Mucosa of descending colon (tissue), 3 donors: ENCODE measurements at regions of chr4 and their contacts with region 1.

Region 1: GRCh38 chr4:55345980-55346850 is at the start of gene SRD5A3:
- DNase-seq: peak; percentile 88 to 94 (median 89)
- ATAC-seq: peak; percentile 99
- H3K4me3 ChIP-seq: peak within 1 kb of the TSS; percentile 57
- H3K4me1 ChIP-seq: peaks cover 10% of the 10 kb centered on the region
- CTCF ChIP-seq: peak; percentile 96
- total RNA-seq, gene SRD5A3: 5.9 to 14.7 (median 14.0) TPM

Region 2: DNA sequence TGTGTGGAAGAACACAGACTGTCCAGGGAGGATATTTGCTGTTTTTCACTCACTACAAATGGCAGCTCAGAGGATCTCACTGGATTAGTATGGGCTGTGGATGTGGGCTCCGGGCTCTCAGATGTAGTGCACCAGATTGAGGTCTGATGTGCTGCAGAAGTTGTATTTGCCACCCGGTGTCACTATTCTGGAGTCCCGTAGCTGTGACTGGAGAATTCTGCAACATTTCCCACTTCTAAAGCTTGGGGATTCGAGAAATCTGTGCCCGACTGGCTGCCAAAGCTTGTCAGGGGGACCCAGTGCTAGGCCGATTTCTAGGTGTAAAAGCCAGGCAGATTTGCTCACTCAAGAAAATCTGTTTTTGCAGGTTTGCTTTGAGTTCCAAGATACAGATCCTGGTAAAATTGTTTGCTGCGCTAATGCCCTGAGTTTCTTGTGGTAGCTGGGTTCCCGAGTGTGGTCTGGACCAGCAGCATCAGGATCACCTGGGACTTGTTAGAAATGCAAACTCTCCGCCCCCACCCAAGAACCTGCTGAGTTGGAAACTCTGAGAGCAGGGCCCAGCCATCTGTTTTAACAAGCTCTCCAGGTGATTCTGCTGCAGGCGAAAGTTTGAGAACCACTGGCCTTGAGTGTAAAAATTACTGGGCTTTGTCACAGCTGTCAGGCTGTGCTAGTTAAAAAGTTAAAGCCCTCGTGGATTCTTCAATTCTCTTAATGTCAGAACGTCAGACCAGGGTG is 670.3 kb before region 1 on chr4:
- intact Hi-C with region 1: no loop called
- DNase-seq: no peak
- ATAC-seq: no peak
- H3K4me3 ChIP-seq: no peak overlapping the region
- H3K4me1 ChIP-seq: no peaks in the 10 kb centered on the region
- CTCF ChIP-seq: no peak

Region 3: GRCh38 chr4:55051532-55051931 is 294.7 kb before region 1 on chr4:
- intact Hi-C with region 1: no loop called
- DNase-seq: no peak
- ATAC-seq: no peak
- H3K4me3 ChIP-seq: no peak overlapping the region
- H3K4me1 ChIP-seq: no peaks in the 10 kb centered on the region
- CTCF ChIP-seq: no peak

Region 4: GRCh38 chr4:55395529-55396307 is 49.5 kb after region 1 on chr4 and contains the start of gene TMEM165:
- intact Hi-C with region 1: loop called in 1 of 2 experiments (anchors 10 kb)
- DNase-seq: peak; percentile 95 to 97 (median 97)
- ATAC-seq: peak; percentile 98
- H3K4me3 ChIP-seq: peak within 1 kb of the TSS; percentile 92
- H3K4me1 ChIP-seq: peaks cover 26% of the 10 kb centered on the region
- CTCF ChIP-seq: no peak
- total RNA-seq, gene TMEM165: 56.4 to 85.8 (median 77.6) TPM

Region 5: DNA sequence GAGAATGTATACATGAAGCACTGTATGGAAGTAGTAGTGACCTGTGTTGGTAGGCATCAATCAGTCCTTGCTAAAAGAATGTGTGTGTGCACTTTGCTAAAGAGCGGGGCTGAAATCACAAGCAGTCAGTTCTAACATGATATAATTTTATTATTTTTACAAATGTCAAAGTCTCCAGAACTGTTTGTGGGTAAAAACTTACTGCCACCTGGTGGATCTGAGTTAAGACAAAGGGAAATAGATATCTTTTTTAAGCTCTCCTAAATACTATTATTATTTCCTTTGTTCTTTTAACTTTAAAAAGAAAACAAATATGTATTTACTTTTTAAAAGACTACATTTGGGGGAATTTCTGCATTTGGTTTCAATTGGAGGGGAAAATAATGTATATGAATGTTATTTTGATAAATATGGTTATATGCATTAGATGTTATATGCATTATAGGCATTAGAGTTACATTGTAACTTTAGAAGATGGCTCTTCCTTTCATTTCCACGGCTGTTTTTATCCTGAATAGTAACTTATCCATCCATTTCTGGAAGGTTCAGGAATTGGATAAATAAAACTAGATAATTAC is 208.3 kb after region 1 on chr4:
- intact Hi-C with region 1: loop called in 1 of 2 experiments (anchors 10 kb)
- DNase-seq: peak in 1 of 3 donors; percentile 17
- ATAC-seq: no peak
- H3K4me3 ChIP-seq: no peak overlapping the region
- H3K4me1 ChIP-seq: no peaks in the 10 kb centered on the region
- CTCF ChIP-seq: no peak